Activated T-helper 2 cell treated with anti-CD3 and anti-CD28 coated beads, Interferon-gamma antibody, Interleukin-2, Interleukin-4, amounts not matched to agents 10 μg/mL and 5 μg/mL and 100 μg/mL, durations not matched to agents 14 hours and 24 hours and 36 hours (primary cell): ENCODE measurements at regions of chr5 and their contacts with region 1.

Region 1: GRCh38 chr5:56328753-56329560 is 95.8 kb upstream of the ANKRD55 start:
- DNase-seq: peak; percentile 52
- H3K4me3 Mint-ChIP-seq: peak overlapping the region; percentile 58
- H3K27ac Mint-ChIP-seq: peak overlapping the region; percentile 89
- H3K4me1 Mint-ChIP-seq: peaks cover 60% of the 10 kb centered on the region
- H3K27me3 Mint-ChIP-seq: no peaks in the 10 kb centered on the region

Region 2: DNA sequence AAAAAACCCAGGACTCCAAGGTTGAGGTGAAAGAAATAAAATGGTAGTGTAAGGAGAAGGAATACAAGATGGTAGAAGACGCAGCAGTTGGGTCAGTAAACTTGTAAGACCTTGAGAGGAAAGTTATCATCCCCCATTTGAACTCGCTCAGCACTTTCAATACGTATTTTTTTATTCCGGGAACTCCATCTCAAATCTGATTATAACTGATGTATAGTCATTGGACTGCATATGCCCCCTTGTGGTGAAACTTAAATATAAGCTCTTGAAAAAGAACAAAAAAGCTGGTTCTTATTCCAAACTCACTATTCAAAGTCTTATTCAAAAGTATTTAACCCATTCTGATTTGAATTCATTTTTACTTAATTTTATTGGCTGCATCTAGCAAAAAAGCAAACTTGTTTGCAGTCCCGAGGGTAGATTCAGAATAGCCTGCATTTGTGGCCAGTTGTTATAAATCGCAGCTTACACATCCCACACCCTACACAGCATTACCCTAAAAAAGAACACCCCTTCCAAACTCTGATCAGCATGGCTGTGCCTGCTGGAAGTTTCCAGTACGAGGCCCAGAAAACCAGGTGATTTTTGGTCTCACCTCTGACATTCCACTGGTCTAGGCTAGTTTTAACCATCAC is 1461.5 kb before region 1 on chr5:
- intact Hi-C with region 1: loop called (anchors 5 kb)
- DNase-seq: no peak
- H3K4me3 Mint-ChIP-seq: no peak overlapping the region
- H3K27ac Mint-ChIP-seq: no peak overlapping the region
- H3K4me1 Mint-ChIP-seq: peaks cover 29% of the 10 kb centered on the region
- H3K27me3 Mint-ChIP-seq: peaks cover 64% of the 10 kb centered on the region

Region 3: GRCh38 chr5:55994574-55995333 is 334.2 kb before region 1 on chr5 and contains the start of gene IL6ST:
- intact Hi-C with region 1: loop called (anchors 2 kb)
- DNase-seq: peak; percentile 93
- H3K4me3 Mint-ChIP-seq: peak within 1 kb of the TSS; percentile 95
- H3K27ac Mint-ChIP-seq: peak within 1 kb of the TSS; percentile 94
- H3K4me1 Mint-ChIP-seq: peaks cover 53% of the 10 kb centered on the region
- H3K27me3 Mint-ChIP-seq: no peaks in the 10 kb centered on the region
- total RNA-seq, gene IL6ST: 56.2 and 67.2 TPM in 2 replicates

Region 4: DNA sequence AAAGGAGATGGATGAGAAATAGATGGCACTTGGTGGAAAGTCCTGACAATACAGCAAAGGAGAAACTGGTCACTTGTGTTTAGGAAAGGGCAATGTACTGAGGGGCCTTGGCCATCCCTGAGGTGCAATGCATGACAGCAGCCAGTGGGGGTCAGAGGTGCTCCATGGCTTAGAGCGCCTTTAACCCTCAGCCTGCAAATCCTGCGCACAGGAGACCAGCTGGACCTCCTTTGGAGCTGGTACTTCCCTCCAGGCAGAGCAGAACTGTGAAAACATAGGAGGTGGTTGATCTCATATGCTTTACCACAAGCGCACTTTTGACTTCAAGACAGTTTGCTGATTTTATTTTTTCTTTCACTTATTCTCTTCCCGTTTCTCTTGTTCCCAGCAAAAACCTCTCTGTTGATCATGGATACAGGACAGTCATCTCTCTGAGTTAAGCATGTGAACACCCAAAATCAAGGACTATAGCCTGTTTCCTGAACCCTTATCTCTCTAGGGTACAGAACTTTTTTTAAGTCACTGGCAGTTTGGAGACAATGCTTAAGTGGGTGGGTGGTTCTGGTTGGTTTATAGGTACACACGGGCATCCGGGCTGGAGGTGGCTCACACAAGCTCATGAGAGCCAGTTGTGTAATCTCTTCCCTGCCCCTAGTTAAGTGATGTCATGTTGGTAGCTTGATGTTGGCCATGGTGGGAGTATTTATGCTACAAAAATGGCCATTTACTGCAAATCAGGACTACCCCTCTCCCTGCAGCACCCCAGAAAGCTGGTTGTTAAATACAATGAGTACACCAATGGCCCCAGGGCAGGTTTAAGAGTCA is 58.2 kb before region 1 on chr5:
- intact Hi-C with region 1: loop called (anchors 2 kb)
- DNase-seq: peak; percentile 64
- H3K4me3 Mint-ChIP-seq: peak overlapping the region; percentile 0
- H3K27ac Mint-ChIP-seq: no peak overlapping the region
- H3K4me1 Mint-ChIP-seq: peaks cover 20% of the 10 kb centered on the region
- H3K27me3 Mint-ChIP-seq: no peaks in the 10 kb centered on the region

Region 5: GRCh38 chr5:56610093-56610698 is 281.2 kb after region 1 on chr5:
- intact Hi-C with region 1: loop called (anchors 5 kb)
- DNase-seq: peak; percentile 43
- H3K4me3 Mint-ChIP-seq: peak overlapping the region; percentile 41
- H3K27ac Mint-ChIP-seq: peak overlapping the region; percentile 35
- H3K4me1 Mint-ChIP-seq: peaks cover 83% of the 10 kb centered on the region
- H3K27me3 Mint-ChIP-seq: no peaks in the 10 kb centered on the region

Region 6: DNA sequence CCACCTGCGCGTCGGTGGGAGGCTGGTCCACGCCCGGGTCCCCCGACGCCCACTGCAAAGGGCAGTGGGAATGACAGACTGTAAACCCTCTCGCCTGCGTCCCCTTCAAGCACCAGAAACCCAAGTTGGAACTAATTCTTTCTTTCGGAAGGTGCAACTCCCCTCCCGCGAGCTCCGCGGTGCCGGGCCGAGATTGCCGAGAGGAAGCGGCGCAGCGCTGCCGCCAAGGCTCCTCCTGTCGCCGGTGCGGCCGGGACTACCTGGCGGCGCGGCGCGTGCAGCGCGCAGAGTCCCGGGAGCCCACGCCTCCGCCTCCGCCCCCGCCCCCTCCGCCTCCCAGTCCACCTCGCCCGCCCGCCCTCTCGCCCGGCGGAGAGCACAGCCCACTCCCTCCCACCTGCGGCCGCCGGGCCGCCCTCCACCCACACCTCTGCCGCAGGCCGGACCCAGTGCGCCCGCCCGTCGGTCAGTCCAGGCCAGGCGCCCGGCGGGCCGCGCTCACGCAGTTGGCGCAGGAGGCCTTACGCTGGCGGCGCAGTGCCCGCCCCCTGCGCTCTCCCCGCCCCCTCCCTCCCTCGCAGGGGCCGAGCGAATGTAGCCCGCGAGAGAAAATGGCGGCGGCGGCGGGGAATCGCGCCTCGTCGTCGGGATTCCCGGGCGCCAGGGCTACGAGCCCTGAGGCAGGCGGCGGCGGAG is 486.2 kb after region 1 on chr5 and contains the start of gene MAP3K1:
- intact Hi-C with region 1: loop called (anchors 1 kb)
- DNase-seq: peak; percentile 75
- H3K4me3 Mint-ChIP-seq: peak within 1 kb of the TSS; percentile 87
- H3K27ac Mint-ChIP-seq: peak within 1 kb of the TSS; percentile 88
- H3K4me1 Mint-ChIP-seq: peaks cover 43% of the 10 kb centered on the region
- H3K27me3 Mint-ChIP-seq: peaks cover 6% of the 10 kb centered on the region
- total RNA-seq, gene MAP3K1: 19.9 and 20.7 TPM in 2 replicates